ENCODE measurements at regions of chr7 and their contacts with region 1.

Region 1: DNA sequence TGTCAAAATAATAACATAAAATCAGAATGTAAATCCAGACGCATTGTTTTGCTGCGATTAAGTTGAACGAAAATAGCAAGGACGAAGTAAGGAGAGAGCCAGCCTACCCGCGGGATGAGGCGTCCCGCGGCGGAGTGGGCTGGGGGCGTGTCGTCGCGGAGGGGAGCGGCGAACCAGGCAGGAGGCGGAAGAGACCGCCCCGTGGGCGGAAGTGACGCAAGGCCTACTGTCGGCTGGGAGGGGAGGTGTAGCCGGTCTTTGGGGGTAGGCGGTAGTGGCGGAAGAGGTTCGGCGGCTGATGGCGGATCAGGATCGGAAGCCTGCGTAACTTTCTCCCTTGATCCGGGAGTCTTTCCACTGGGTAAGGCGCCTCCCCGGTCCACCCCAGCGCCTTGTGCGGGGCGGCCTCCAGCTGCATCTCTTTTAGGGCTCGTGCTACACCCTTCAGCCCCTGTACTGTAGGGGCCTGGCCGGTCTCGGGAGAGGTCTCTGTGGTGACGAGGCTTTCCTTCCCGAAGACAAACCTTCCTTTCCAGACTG is at the start of gene TAX1BP1:
- DNase-seq: peak; percentile 99
- total RNA-seq, gene TAX1BP1: 149 TPM

Region 2: DNA sequence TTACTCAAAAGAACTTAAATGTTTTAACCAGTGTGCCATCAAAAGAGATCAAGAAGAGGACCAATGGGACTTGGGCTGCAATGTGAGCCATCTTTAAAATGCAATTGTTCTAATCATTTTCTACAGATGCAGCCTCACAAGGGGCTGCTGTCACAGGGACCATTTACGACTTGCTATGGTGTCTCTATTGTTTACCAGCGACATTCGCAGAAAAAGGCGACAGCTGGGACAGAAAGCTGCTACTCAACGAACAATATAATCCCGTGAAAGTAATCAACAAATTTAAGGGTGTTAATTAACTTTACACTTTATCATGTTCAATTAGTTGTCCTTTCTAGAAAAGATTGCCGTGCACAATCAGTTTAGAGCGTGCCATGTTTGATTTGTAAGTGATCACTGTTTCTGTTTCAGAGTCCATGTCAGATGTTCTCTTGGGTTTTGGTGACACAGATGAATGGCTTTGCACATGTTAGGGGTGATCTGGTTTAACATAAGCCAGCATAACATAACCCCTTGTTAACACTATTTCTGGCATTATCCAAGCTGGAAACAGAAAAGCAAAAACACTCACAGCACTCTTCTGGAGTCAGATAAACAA is 188.1 kb before region 1 on chr7:
- intact Hi-C with region 1: no loop called
- DNase-seq: no peak

Region 3: GRCh38 chr7:27662490-27663205 is 77.3 kb before region 1 on chr7 and contains the start of gene HIBADH:
- intact Hi-C with region 1: loop called (anchors 1 kb)
- DNase-seq: peak; percentile 99
- total RNA-seq, gene HIBADH: 54.8 TPM

Region 4: DNA sequence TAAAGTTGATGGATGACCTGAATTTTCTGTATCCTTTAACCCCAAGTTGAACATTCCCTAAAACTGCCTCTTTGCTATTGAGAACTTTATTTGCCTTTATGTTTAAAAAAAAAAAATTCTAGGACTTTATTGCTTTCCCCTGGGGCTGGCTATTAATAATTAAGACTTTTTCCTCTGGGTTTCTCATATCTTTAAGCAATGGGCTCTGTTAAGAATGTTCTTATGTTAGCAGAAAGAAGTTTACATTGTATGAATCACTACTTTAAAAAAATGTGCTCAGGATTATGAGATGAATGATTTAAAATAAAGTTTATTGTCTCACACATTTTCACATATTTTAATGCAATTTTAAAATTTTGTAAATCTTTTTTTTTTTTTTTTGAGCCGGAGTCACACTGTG is 19.5 kb after region 1 on chr7:
- intact Hi-C with region 1: no loop called
- DNase-seq: no peak

Region 5: GRCh38 chr7:27784393-27785053 is 44.5 kb after region 1 on chr7:
- intact Hi-C with region 1: no loop called
- DNase-seq: no peak

Region 6: DNA sequence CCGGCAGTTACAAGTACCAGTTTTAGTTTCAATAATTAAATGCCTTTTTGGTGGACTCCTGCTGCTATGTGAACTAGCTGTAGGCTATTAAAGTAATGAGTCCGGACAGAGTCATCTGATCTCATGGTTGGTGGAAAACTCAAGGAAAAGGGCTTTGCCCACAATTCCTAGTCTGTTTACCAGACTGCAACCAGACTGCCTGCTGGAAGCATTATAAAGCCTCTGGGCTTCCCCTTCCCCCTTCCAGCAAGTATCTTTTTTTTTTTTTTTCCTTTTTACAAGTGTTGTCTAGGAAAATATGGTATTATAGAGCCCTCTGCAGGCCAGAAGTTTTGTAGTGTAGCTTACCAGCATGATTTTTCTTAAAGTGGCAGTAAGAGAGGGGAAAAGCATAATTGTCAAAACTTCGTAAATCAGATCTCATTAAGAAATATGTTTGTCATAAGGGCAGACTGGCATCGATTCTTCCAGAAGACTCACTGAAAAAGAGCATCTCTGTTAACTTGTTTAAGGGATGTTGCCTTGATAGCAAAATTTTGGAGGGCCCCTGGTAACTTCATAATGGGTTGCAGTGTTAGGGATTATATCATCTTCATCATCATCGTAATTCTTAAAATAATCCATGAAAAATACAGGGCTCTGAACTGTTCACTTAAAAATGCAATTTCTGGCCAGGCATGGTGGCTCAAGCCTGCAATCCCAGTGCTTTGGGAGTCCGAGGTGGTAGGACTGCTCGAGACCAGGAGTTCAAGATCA is 181.3 kb after region 1 on chr7:
- intact Hi-C with region 1: loop called (anchors 10 kb)
- DNase-seq: no peak